ENCODE measurements at regions of chr20 and their contacts with region 1.

Region 1: DNA sequence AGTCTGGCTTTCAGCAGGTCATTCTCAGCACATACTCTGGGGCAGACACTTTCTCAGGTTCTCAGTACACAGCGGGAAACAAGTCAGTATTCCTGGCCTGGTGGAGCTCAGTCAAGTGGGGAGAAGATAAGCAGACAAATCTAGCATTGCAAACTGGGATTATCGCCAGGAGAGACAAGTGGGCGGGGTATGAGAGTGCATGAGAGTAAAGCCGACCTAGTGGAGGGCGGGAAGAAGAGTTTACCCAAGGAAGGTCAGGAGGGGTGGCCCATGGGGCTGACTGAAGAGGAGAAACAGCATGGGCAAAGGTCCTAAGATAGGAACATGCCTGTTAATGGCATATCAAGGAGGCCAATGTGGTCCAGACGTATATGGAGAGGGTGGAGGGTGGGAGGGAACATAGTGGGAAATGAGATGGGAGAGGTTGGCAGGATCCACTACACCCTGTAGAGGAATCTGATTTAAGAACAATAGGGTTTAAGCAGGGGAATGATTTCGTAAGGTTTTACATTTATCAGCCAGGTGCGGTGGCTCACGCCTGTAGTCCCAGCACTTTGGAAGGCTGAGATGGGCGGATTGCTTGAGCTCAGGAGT is 12.4 kb upstream of the CSNK2A1 start:
- DNase-seq: peak; percentile 25
- H3K4me3 ChIP-seq: no peak overlapping the region
- H3K27ac ChIP-seq: no peak overlapping the region
- H3K4me1 ChIP-seq: no peaks in the 10 kb centered on the region
- H3K27me3 ChIP-seq: peaks cover 49% of the 10 kb centered on the region
- CTCF ChIP-seq: no peak
- EP300 ChIP-seq: no peak
- POLR2A ChIP-seq: no peak

Region 2: DNA sequence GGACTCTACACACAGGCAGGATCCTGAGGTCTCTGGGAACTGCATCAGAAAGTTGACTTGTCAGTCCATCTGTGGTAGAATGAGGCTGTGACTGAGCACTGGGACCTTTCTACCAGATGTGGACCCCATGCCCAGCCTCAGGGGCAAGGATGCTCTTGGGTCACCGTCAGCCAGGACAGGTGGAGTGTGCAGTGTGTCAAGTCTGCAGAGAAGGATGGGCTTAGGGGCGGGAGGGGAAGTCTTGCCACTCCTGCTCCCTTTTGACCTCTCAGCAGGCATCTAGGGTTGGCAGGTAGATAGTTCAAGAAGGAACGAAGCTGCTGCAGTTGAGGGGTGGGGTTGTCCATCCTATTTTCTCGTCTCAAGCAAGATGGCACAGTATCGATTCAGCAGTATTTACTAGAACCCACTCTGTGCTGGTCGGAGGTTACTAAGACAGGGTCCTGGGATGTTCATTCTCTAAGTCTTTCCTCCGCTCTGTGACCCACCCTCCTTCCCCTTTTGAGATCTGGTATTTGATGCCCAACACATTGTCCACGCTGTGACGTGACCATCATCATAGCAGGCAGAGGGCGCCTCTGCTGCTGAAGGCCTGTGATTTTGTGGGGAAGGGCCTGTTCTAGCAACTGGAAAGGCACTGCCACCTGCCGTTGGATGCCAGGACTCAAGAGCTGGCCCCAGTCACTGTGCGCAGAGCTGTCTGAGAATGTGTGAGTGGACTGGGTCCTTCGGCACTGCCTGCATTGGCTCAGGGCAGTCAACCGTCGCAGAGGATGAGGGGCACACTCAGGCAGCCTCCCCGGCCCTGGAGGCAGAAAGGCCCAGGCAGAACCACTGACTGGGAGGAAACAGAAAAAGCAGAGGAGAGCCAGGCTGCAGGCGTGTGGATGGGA is 124.8 kb before region 1 on chr20:
- in situ Hi-C with region 1: no loop called
- intact Hi-C with region 1: no loop called
- DNase-seq: peak; percentile 59
- H3K4me3 ChIP-seq: no peak overlapping the region
- H3K27ac ChIP-seq: no peak overlapping the region
- H3K4me1 ChIP-seq: no peaks in the 10 kb centered on the region
- H3K27me3 ChIP-seq: no peaks in the 10 kb centered on the region
- CTCF ChIP-seq: peak; percentile 31 to 69 (median 50)
- EP300 ChIP-seq: no peak
- POLR2A ChIP-seq: no peak

Region 3: DNA sequence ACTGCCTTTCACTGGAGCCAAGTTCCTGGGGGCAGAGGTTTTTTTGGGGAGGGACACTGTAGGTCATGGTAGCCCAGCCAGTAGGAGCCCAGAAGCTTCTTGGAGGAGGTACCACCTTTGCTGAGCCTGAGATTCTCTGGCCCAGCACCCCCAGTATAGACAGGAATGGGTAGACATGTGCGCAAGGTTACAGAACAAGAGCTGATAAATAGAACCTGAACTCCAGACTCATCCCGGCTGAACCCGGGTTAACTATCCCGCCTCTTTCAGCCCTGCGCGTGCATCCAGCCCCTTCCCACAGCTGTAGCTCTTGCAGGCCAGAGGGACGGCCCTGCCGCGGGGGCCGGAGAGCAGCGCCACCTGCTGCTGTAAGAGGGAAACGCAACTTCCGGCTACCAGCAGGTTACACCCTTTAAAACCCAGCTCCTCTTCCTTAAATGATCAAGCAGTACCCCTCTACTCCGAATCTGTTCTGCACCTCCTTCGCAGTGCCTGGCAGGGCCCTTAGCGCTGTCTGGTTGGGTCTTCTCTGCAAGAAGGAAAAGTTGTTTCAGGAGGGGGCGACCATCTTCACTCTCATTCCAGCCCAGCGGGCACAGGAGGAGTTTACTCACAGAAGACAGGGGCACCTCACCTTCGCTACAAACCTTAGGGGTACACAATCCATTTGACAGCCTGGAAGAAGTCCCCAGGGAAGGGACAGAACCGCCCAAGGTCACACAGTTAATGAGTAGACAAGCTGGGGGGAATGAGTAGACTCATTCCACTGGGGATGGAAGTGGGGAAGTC is 89.5 kb after region 1 on chr20:
- in situ Hi-C with region 1: loop called in 3 of 4 experiments (anchors 10 kb)
- intact Hi-C with region 1: no loop called
- DNase-seq: peak; percentile 74
- H3K4me3 ChIP-seq: no peak overlapping the region
- H3K27ac ChIP-seq: no peak overlapping the region
- H3K4me1 ChIP-seq: peaks cover 0 to 9% (median 2%) of the 10 kb centered on the region in 4 donors
- H3K27me3 ChIP-seq: peaks cover 11% of the 10 kb centered on the region
- CTCF ChIP-seq: peak; percentile 84 to 96 (median 92)
- EP300 ChIP-seq: no peak
- POLR2A ChIP-seq: no peak

Region 4: DNA sequence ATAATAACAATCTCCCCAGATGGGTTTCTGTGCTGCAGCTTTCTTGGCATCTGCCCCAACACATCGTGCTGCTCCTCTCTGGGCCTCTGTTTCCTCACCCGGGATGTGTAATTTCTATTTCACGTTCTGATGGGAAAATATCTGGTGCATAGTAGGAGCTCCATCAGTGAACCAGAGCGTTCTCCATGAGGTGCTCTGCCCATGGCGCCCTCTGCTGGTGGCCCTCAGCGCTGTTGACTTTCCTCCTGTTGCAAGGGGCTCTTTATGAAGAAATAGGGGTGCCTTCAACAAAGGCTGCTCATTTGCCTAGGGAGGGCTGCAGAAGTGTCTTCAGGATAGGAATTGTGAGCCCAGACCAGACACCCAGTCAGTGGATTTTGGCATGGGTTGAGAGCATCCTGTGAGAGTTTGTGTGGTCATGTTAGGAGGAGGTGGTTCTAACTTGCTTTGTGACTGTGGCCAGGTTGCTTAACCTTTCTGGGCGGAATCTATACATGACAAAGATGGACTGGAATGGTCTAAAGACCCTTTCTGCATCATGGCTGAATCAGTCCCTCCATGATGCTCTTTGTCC is 111.4 kb after region 1 on chr20:
- in situ Hi-C with region 1: no loop called
- intact Hi-C with region 1: no loop called
- DNase-seq: peak; percentile 54
- H3K4me3 ChIP-seq: no peak overlapping the region
- H3K27ac ChIP-seq: no peak overlapping the region
- H3K4me1 ChIP-seq: no peaks in the 10 kb centered on the region
- H3K27me3 ChIP-seq: peaks cover 85% of the 10 kb centered on the region
- CTCF ChIP-seq: peak; percentile 59 to 81 (median 69)
- EP300 ChIP-seq: no peak
- POLR2A ChIP-seq: no peak

Region 5: GRCh38 chr20:717832-718231 is 161.8 kb after region 1 on chr20:
- in situ Hi-C with region 1: no loop called
- intact Hi-C with region 1: no loop called
- DNase-seq: no peak
- H3K4me3 ChIP-seq: no peak overlapping the region
- H3K27ac ChIP-seq: no peak overlapping the region
- H3K4me1 ChIP-seq: no peaks in the 10 kb centered on the region
- H3K27me3 ChIP-seq: peaks cover 45% of the 10 kb centered on the region
- CTCF ChIP-seq: no peak
- EP300 ChIP-seq: no peak
- POLR2A ChIP-seq: no peak

Region 6: DNA sequence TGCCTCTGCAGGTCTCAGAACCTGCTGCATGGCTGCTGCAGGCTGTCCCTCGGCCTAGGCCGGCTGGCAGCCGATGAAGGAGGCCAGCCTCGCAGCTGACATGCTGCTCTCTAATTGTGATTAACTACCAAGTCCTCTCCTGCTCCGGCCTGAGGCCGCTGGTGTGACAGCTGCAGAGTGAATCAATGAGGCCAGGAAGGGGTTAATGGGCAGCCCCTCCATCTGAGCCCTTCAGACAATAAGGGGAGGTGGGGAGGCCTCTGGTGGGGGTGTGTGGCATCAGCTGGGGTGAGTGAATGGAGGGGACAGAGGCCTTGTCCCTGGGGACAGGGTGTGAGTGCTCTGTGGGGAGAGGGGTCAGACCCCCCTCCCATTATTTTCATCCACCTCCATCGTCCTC is 177.8 kb after region 1 on chr20:
- in situ Hi-C with region 1: loop called (anchors 10 to 25 kb)
- intact Hi-C with region 1: loop called (anchors 2 kb)
- DNase-seq: no peak
- H3K4me3 ChIP-seq: no peak overlapping the region
- H3K27ac ChIP-seq: no peak overlapping the region
- H3K4me1 ChIP-seq: no peaks in the 10 kb centered on the region
- H3K27me3 ChIP-seq: peaks cover 33% of the 10 kb centered on the region
- CTCF ChIP-seq: no peak
- EP300 ChIP-seq: no peak
- POLR2A ChIP-seq: no peak